Activated naive CD4-positive, alpha-beta T cell treated with anti-CD3 and anti-CD28 coated beads for 36 hours (primary cell): ENCODE measurements at regions of chr2 and their contacts with region 1.

Region 1: GRCh38 chr2:155377266-155377680 is 678.8 kb downstream of the KCNJ3 start:
- DNase-seq: no peak
- H3K4me3 Mint-ChIP-seq: no peak overlapping the region
- H3K27ac Mint-ChIP-seq: no peak overlapping the region
- H3K4me1 Mint-ChIP-seq: peaks cover 2% of the 10 kb centered on the region
- H3K27me3 Mint-ChIP-seq: peaks cover 2% of the 10 kb centered on the region

Region 2: DNA sequence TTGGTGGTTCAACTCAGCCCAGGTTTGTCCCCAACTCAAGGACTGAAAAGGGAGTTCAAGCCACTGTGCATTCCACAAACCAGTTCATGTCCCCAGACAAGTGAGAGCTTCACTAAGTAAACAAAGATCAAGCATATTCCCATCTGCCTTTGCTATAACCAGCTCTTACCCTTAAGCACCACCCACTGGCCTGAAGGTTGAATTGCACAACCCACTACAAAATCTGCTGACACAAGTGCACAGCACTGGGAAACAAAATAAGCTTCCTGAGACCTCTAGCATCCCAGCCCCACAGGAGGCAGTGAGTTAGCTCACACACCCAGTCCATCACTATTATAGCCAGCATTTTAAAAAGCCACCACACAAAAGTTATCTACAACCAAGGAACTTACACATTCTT is 438.6 kb after region 1 on chr2:
- CTCF ChIA-PET with region 1: no interaction called
- intact Hi-C with region 1: loop called (anchors 5 kb)
- DNase-seq: peak; percentile 12
- H3K4me3 Mint-ChIP-seq: no peak overlapping the region
- H3K27ac Mint-ChIP-seq: no peak overlapping the region
- H3K4me1 Mint-ChIP-seq: no peaks in the 10 kb centered on the region
- H3K27me3 Mint-ChIP-seq: no peaks in the 10 kb centered on the region

Region 3: DNA sequence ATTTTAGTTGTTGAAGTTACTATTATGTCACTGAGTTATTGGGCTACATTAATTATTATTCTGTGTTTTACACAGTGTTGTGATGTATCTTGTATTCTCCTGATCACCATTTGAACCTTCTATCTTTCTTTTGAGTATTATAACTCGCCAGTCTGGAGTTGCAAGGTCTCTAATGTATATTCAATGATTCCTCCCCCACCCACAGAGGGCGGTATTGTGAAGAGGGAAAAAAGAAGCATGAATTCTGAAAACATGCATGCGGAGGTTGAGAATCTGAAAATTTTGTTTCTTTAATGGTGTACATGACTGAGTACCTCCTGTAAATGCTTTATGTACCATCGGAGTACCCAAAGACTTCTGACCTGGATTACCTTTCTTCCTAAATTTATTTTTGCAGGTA is 688.6 kb after region 1 on chr2:
- CTCF ChIA-PET with region 1: no interaction called
- intact Hi-C with region 1: loop called (anchors 10 kb)
- DNase-seq: peak; percentile 11
- H3K4me3 Mint-ChIP-seq: no peak overlapping the region
- H3K27ac Mint-ChIP-seq: no peak overlapping the region
- H3K4me1 Mint-ChIP-seq: no peaks in the 10 kb centered on the region
- H3K27me3 Mint-ChIP-seq: no peaks in the 10 kb centered on the region

Region 4: GRCh38 chr2:157055660-157056199 is 1678.5 kb after region 1 on chr2:
- CTCF ChIA-PET with region 1: interaction called, 4 read pairs
- intact Hi-C with region 1: loop called (anchors 2 kb)
- DNase-seq: no peak
- H3K4me3 Mint-ChIP-seq: no peak overlapping the region
- H3K27ac Mint-ChIP-seq: no peak overlapping the region
- H3K4me1 Mint-ChIP-seq: no peaks in the 10 kb centered on the region
- H3K27me3 Mint-ChIP-seq: peaks cover 4% of the 10 kb centered on the region